Posterior vena cava (tissue), 2 donors: ENCODE measurements at regions of chr2 and their contacts with region 1.

Region 1: DNA sequence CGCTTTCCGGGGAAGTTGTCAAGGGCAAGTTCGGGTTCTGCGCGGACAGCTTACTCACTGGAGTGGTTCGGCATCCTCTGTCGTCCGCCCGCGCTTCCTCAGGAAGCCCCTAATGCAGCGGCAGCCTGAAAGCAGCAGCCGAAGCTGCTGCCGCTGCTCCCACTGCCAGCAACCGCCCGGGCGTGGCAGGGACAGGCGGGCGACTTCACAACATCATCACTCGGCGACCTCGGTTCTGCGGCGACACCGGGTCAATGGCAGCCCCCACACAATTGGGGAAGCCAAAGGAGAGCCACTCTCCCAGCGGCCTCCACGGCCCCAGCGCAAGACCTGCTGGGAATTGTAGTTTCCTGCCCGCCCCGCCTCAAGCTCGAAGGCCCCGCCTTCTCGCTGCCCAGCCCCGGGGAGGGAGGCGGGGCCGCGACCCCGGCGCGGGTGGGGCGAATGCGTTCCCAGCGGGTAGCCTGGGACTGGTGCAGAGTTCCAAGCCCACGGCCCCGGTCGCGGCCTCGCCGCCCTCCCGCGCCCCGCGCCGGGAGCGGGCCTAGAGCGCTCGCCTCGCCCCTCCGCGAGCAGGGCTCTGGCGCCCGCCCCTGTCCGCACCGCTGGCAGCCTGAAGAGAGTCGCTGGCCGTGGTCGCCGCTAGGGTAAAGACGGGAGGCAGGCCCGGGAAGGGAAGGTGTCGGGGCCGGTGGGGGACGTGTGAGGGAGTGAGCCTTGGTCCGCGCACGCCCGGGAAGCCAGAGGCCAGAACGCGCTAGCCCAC is at the starts of genes STRADB and TRAK2:
- DNase-seq: peak; percentile 98
- total RNA-seq, gene STRADB: 11.7 to 18.0 TPM
- total RNA-seq, gene TRAK2: 96.6 to 124 TPM

Region 2: GRCh38 chr2:201406077-201406662 is 45.3 kb before region 1 on chr2:
- intact Hi-C with region 1: loop called in 1 of 2 experiments (anchors 5 kb)
- DNase-seq: no peak